ENCODE measurements at regions of chr4 and their contacts with region 1.

Region 1: DNA sequence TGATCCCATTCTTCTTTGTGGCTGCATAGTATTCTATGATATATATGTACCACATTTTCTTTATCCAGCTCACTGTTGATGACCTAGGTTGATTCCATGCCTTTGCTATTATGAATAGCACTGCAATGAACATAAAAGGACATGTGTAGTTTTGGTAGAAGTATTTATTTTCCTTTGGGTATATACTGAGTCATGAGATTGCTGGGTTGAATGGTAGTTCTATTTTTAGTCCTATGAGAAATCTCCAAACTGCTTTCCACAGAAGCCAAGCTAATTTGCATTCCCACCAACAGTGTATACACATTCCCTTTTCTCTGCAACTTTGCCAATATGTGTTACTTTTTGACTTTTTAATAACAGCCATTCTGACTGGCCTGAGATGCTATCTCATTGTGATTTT is 278.3 kb downstream of the PCDH18 start:
- DNase-seq: peak; percentile 85
- ATAC-seq: peak; percentile 73
- H3K4me3 ChIP-seq: no peak overlapping the region
- H3K27ac ChIP-seq: no peak overlapping the region
- H3K4me1 ChIP-seq: no peaks in the 10 kb centered on the region
- H3K27me3 ChIP-seq: no peaks in the 10 kb centered on the region
- CTCF ChIP-seq: no peak
- POLR2A ChIP-seq: no peak
- RAD21 ChIP-seq: no peak

Region 2: GRCh38 chr4:137293281-137293680 is 39.3 kb after region 1 on chr4:
- CTCF ChIA-PET with region 1: no interaction called
- POLR2A ChIA-PET with region 1: no interaction called
- dilution Hi-C with region 1: no loop called
- in situ Hi-C with region 1: no loop called
- intact Hi-C with region 1: loop called (anchors 1 kb)
- DNase-seq: no peak
- ATAC-seq: no peak
- H3K4me3 ChIP-seq: no peak overlapping the region
- H3K27ac ChIP-seq: no peak overlapping the region
- H3K4me1 ChIP-seq: no peaks in the 10 kb centered on the region
- H3K27me3 ChIP-seq: no peaks in the 10 kb centered on the region
- CTCF ChIP-seq: no peak
- POLR2A ChIP-seq: no peak
- RAD21 ChIP-seq: no peak

Measured in IMR-90 (cell line).